Dendritic cell treated with granulocyte-macrophage colony-stimulating factor and Interleukin-4, amounts not matched to agents 40 ng/mL and 50 ng/mL, for 4 days (primary cell): ENCODE measurements at regions of chr4 and their contacts with region 1.

Region 1: GRCh38 chr4:36325499-36325898 is 44.1 kb downstream of the DTHD1 start:
- H3K4me3 Mint-ChIP-seq: peak overlapping the region; percentile 24
- H3K27ac Mint-ChIP-seq: peak overlapping the region; percentile 97
- H3K4me1 Mint-ChIP-seq: peaks cover 71% of the 10 kb centered on the region
- H3K27me3 Mint-ChIP-seq: no peaks in the 10 kb centered on the region

Region 2: GRCh38 chr4:36244257-36245079 is 81.0 kb before region 1 on chr4 and contains the start of gene ARAP2:
- intact Hi-C with region 1: loop called (anchors 5 kb)
- H3K4me3 Mint-ChIP-seq: peak within 1 kb of the TSS; percentile 86
- H3K27ac Mint-ChIP-seq: peak within 1 kb of the TSS; percentile 91
- H3K4me1 Mint-ChIP-seq: peaks cover 21% of the 10 kb centered on the region
- H3K27me3 Mint-ChIP-seq: peaks cover 4% of the 10 kb centered on the region

Region 3: DNA sequence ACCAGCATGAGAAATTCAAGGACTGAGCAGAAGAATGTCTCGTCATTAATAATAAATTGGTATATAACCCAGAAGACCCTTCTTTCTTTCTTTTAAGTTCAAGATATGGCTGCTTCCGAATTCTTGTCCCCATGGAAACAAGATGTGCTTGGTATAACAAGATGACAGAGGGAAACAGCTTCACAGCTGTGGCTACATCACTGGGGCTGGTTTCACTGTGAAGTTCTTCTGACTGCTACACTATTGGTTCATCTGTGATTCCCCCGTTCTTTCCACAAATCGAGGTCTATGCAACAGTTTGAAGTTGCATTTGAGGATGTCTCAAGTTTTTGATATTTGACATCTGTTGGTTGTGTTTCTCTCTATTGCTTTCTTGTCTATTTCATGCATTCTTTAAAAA is 56.4 kb before region 1 on chr4:
- intact Hi-C with region 1: no loop called
- H3K4me3 Mint-ChIP-seq: no peak overlapping the region
- H3K27ac Mint-ChIP-seq: no peak overlapping the region
- H3K4me1 Mint-ChIP-seq: peaks cover 13% of the 10 kb centered on the region
- H3K27me3 Mint-ChIP-seq: no peaks in the 10 kb centered on the region

Region 4: DNA sequence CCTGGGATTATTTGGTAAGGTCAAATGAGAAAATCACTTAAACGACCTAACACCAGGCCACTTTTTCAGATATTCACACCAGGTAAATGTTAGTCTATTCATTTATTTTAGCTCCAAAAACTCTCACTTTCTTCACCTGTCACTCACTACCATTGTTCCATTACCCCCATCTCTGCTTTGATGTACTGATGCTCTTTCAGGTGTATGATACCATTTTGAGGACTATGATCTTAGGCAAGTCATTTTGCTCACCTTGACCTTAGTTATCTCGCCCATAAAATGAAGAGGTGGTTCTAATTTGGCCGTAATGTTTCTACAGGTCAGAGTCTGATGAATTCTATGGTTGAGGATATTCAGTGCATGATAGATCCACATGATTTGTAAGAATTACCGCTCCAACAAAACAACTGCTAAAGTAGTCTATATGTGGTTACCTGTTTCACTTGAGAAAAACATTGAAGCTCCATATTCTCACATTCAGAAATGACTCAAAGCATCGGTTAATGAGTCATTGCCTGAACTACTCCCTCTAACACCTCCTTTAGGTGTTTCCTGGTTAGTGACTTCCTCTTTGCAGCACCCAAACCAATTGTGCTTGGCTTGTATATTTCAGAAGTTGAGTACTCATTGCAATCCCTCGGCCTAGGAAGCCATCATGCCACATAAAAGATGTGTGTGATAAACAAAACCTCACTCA is 39.6 kb before region 1 on chr4:
- intact Hi-C with region 1: loop called (anchors 5 kb)
- H3K4me3 Mint-ChIP-seq: no peak overlapping the region
- H3K27ac Mint-ChIP-seq: no peak overlapping the region
- H3K4me1 Mint-ChIP-seq: peaks cover 13% of the 10 kb centered on the region
- H3K27me3 Mint-ChIP-seq: no peaks in the 10 kb centered on the region

Region 5: DNA sequence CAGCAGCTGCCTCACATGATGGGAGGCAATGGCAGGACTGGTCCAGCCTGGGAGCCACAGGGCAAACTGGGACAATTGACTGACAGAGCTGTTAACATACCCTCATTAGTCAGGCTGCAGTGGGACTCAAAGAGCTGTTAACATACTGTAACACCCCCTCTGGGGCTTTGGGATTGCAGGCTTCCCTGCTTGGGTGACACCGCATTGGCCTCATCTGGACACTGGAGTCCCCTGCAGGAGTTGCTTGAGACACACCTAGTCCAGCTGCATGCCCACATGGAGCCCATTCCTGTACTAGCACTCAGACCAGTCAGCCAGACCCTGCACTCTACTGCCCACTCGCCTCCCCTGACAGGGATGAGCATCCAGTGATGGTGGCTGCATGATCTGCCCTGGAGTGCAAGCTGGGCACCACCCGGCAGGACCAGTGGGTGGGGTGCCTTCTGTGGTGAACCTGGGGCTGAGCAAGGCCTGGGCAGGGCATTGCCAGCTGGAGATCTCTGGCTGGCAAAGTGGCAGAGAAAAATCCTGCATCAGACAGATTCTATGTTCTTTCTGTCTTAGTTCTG is 94.7 kb after region 1 on chr4:
- intact Hi-C with region 1: no loop called
- H3K4me3 Mint-ChIP-seq: no peak overlapping the region
- H3K27ac Mint-ChIP-seq: no peak overlapping the region
- H3K4me1 Mint-ChIP-seq: no peaks in the 10 kb centered on the region
- H3K27me3 Mint-ChIP-seq: peaks cover 7% of the 10 kb centered on the region

Region 6: DNA sequence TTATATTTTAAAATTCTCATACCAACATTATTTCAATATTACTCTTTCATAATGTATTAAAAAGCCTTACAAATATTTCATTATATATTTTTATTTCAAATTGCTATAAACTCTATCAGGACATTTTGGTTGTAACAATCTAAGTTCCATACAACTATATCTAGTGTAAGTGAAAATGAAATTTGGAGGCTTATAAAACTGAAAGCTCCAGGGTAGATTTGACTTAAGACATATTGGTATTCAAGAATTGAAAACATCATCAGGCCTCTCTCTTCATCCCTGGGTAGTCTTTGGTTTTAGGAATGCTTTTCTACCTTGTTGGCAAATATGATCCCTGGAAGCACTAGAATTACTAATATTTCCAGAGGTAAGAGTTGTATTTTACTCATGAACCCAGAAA is 298.5 kb after region 1 on chr4:
- intact Hi-C with region 1: no loop called
- H3K4me3 Mint-ChIP-seq: no peak overlapping the region
- H3K27ac Mint-ChIP-seq: no peak overlapping the region
- H3K4me1 Mint-ChIP-seq: no peaks in the 10 kb centered on the region
- H3K27me3 Mint-ChIP-seq: no peaks in the 10 kb centered on the region